ENCODE measurements at regions of chr15 and their contacts with region 1.

Region 1: GRCh38 chr15:70892002-70892914 is at the starts of genes LRRC49 and THAP10:
- DNase-seq: peak; percentile 79 to 82
- H3K4me3 ChIP-seq: peak within 1 kb of the TSS; percentile 66 to 79 (median 76)
- H3K27ac ChIP-seq: peak within 1 kb of the TSS; percentile 66 to 85
- H3K4me1 ChIP-seq: no peaks in the 10 kb centered on the region
- H3K27me3 ChIP-seq: no peaks in the 10 kb centered on the region
- CTCF ChIP-seq: no peak
- POLR2A ChIP-seq: peak; percentile 24
- total RNA-seq, gene LRRC49: 6.7 to 13.3 (median 9.5) TPM
- total RNA-seq, gene THAP10: 1.8 to 5.9 (median 5.1) TPM

Region 2: DNA sequence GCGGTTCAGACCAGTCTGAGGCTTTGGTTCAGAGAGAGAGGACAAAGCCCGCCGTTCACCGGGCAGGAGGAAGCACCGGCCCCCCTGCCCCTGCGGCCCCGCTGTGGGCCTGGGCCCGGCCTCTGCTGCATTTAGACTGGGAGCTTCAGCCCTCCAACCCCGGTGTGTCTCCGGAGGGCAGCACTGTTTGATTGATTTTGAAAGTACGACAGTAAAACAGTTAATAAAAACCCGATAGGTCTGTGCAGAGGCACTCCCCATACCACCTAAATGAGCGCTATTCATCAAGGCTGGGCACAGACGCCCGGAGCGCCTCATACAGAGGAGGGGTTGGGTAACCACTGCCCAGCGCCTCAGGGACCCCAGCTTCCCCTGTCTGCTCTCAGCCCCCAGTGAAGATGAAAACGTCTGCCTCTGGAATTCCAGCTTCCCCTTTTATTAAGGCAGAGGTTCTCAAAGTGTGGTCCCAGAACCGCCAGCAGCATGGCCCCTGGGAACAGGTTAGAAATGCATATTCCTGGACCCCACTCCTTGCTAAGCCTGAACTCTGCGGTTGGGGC is 537.8 kb before region 1 on chr15:
- intact Hi-C with region 1: loop called (anchors 5 kb)
- DNase-seq: no peak
- H3K4me3 ChIP-seq: no peak overlapping the region
- H3K27ac ChIP-seq: no peak overlapping the region
- H3K4me1 ChIP-seq: peaks cover 0 to 1% of the 10 kb centered on the region in 2 donors
- H3K27me3 ChIP-seq: no peaks in the 10 kb centered on the region
- CTCF ChIP-seq: no peak
- POLR2A ChIP-seq: no peak

Region 3: GRCh38 chr15:70923311-70924080 is 31.2 kb after region 1 on chr15:
- intact Hi-C with region 1: no loop called
- DNase-seq: no peak
- H3K4me3 ChIP-seq: no peak overlapping the region
- H3K27ac ChIP-seq: no peak overlapping the region
- H3K4me1 ChIP-seq: no peaks in the 10 kb centered on the region
- H3K27me3 ChIP-seq: no peaks in the 10 kb centered on the region
- CTCF ChIP-seq: no peak
- POLR2A ChIP-seq: no peak

Region 4: DNA sequence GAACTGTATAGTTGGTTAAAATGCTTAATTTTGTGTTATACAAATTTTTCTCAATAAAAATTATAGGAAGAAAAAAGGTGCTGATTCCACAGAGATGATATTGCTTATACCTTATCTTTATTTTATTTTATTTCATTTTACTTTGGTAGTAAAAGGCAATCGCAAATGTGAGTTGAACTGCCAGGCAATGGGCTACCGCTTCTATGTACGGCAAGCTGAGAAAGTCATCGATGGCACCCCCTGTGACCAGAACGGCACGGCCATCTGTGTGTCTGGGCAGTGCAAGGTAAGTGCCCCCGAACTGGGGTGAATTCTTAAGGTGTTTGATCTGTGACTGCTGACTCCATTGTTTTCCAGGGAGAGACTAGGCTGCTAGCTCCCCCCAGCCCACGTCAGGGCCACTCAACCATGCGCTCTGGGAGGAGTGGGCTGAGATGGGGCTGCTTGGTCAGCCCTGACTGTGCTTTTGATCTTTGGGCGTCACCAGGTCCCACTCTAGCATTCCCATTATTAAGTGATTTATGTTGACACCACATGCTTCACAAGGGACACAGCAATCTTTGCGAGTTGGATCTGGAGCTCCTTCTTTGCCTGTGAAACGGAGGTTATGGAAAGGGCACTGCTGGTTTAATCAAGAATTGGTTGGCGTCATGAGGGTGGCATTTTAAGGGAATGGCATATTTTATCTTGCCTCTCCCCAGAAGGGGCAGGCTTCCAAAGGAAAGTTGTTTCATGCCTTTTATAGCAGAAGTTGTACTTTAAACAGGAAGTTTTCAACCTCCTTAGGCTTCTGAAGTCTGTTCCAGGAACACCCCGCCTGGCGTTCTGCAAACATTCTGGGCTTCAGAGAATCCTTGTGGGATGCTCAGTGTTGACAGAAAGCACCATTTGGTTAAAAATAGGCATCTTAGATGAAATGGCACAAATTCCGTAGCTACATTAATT is 519.6 kb after region 1 on chr15:
- intact Hi-C with region 1: loop called (anchors 5 kb)
- DNase-seq: no peak
- H3K4me3 ChIP-seq: peak overlapping the region in 1 of 3 donors; percentile 3
- H3K27ac ChIP-seq: peak overlapping the region in 1 of 2 donors; percentile 61
- H3K4me1 ChIP-seq: no peaks in the 10 kb centered on the region
- H3K27me3 ChIP-seq: no peaks in the 10 kb centered on the region
- CTCF ChIP-seq: no peak
- POLR2A ChIP-seq: no peak

Measured in breast epithelium (tissue), 4 donors.